Activated CD4-positive, alpha-beta T cell treated with anti-CD3 and anti-CD28 coated beads, Interleukin-2, amount 10 ng/mL, durations not matched to agents 24 days and 14 days (primary cell): ENCODE measurements at regions of chr17 and their contacts with region 1.

Region 1: GRCh38 chr17:7219812-7220581 is at the starts of genes ACADVL and DLG4:
- DNase-seq: peak; percentile 93
- H3K4me3 Mint-ChIP-seq: peak within 1 kb of the TSS; percentile 98
- H3K27ac Mint-ChIP-seq: peak within 1 kb of the TSS; percentile 97
- H3K4me1 Mint-ChIP-seq: peaks cover 50% of the 10 kb centered on the region
- H3K27me3 Mint-ChIP-seq: no peaks in the 10 kb centered on the region
- total RNA-seq, gene ACADVL: 244 and 267 TPM in 2 replicates
- total RNA-seq, gene DLG4: 12.4 and 14.0 TPM in 2 replicates

Region 2: GRCh38 chr17:7234083-7234951 is 14.3 kb after region 1 on chr17 and contains the start of gene DVL2:
- intact Hi-C with region 1: loop called (anchors 1 kb)
- DNase-seq: peak; percentile 98
- H3K4me3 Mint-ChIP-seq: peak within 1 kb of the TSS; percentile 99
- H3K27ac Mint-ChIP-seq: peak within 1 kb of the TSS; percentile 94
- H3K4me1 Mint-ChIP-seq: peaks cover 47% of the 10 kb centered on the region
- H3K27me3 Mint-ChIP-seq: peaks cover 2% of the 10 kb centered on the region
- total RNA-seq, gene DVL2: 71.1 and 77.7 TPM in 2 replicates